ENCODE measurements at regions of chr12 and their contacts with region 1.

Region 1: GRCh38 chr12:6423267-6424007 is 21.3 kb upstream of the CD27 start:
- DNase-seq: peak; percentile 73 to 86
- ATAC-seq: peak; percentile 91 to 99 (median 98)
- H3K4me3 ChIP-seq: no peak overlapping the region
- H3K27ac ChIP-seq: peak overlapping the region in 2 of 10 donors; percentile 26 to 36
- H3K4me1 ChIP-seq: peaks cover 0 to 21% (median 6%) of the 10 kb centered on the region in 9 donors
- H3K27me3 ChIP-seq: no peaks in the 10 kb centered on the region
- CTCF ChIP-seq: peak; percentile 84 to 95 (median 92)

Region 2: DNA sequence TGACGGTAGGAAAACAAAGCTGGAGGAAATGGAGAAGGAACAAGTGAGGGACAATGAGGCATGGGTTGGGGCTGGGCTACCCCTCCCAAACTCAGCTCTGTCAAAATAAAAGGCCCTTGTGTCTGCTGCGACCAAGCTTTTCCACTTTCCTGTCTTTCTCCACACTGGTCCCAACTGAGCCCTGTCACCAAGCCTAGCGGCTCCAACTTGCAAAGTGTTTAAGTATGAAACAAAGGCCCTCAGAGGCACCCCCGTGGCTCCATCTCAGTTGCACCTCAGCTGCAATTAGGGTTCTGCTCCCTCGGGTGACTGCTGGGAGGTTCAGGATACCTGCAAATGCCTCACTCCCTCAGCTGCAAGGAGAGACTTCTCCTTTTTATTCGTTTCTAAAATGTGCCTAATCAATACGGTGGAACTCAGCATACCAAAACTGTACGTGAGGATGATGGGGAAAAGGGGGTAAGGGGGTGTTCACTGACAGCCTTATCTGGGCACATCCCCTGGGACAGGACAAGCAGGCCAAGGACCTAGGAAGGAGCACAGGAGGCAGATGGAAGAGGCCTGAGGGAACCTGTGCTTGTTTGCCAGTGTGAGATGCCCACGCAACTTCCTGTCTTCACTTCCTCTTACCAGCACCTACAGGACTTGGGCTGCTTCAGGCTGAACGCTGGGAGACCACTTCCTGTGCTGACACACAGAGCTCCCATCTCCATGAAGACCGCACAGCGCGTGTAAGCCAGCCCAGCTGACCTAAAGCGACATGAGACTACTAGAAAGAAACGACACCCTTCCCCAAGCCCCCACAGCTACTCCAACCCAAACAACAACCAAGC is 38.2 kb after region 1 on chr12:
- intact Hi-C with region 1: loop called (anchors 1 to 5 kb)
- DNase-seq: no peak
- ATAC-seq: peak; percentile 25 to 61 (median 35)
- H3K4me3 ChIP-seq: peak overlapping the region in 1 of 10 donors; percentile 22
- H3K27ac ChIP-seq: peak overlapping the region in 9 of 10 donors; percentile 39 to 89 (median 56)
- H3K4me1 ChIP-seq: peaks cover 0 to 71% (median 12%) of the 10 kb centered on the region in 9 donors
- H3K27me3 ChIP-seq: no peaks in the 10 kb centered on the region
- CTCF ChIP-seq: no peak

Region 3: GRCh38 chr12:6470375-6471163 is 47.1 kb after region 1 on chr12 and contains the start of gene VAMP1:
- intact Hi-C with region 1: loop called in 7 of 10 experiments (anchors 1 to 2 kb)
- DNase-seq: peak; percentile 97 to 98
- ATAC-seq: peak; percentile 97 to 99 (median 98)
- H3K4me3 ChIP-seq: peak within 1 kb of the TSS; percentile 60 to 78 (median 72)
- H3K27ac ChIP-seq: peak within 1 kb of the TSS; percentile 16 to 93 (median 86)
- H3K4me1 ChIP-seq: peaks cover 4 to 45% (median 21%) of the 10 kb centered on the region in 9 donors
- H3K27me3 ChIP-seq: no peaks in the 10 kb centered on the region
- CTCF ChIP-seq: peak in 2 of 9 donors; percentile 9 to 16
- total RNA-seq, gene VAMP1: 1.4 to 6.1 (median 3.0) TPM

Region 4: DNA sequence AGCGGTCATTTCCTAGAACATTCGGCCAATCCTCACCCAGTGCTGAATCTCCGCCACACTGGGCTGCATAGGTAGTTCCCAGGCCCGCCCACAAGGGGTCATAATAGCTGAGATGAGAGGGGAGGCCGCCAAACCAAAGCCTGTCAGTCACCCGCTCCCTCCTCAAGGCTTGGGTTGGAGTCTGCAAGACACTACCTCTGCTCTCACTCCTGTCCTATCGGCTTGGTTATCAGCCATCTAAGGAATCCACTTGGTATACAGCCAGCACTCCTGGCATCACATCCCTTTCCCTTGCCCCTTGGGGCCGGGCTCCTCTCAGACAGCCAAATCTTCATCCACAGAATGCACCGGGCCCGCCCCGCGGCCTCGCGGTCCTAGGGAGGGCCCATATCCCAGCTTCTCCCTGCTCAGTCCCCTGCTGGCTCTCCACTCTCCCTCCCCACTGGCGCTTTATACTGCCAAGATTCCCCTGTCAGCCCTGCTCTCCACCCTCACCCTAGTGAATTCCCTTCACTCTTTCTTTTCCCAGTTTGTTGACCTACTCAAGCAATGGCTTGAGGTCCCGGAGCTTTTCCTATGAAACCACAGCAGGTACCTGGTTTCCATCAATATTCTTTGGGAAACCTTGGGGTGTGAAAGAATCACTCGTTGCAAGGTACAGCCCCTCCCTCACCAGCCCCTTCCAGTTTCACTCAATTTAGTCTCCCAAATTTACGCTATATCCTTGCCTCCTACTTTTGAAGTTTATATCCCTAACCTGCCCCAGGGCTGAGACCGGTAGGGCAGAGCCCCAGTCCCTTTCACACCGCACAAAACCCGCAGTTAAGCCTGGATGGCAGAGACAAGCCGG is 131.0 kb after region 1 on chr12:
- intact Hi-C with region 1: loop called in 2 of 10 experiments (anchors 2 to 5 kb)
- DNase-seq: peak; percentile 77 to 83
- ATAC-seq: peak; percentile 30 to 57 (median 43)
- H3K4me3 ChIP-seq: peak overlapping the region; percentile 66 to 98 (median 94)
- H3K27ac ChIP-seq: peak overlapping the region; percentile 53 to 98 (median 92)
- H3K4me1 ChIP-seq: peaks cover 40 to 79% (median 70%) of the 10 kb centered on the region in 9 donors
- H3K27me3 ChIP-seq: no peaks in the 10 kb centered on the region
- CTCF ChIP-seq: peak; percentile 40 to 81 (median 69)

Region 5: GRCh38 chr12:6563448-6564050 is 140.1 kb after region 1 on chr12:
- intact Hi-C with region 1: loop called in 2 of 10 experiments (anchors 2 to 5 kb)
- DNase-seq: peak in 1 of 2 donors; percentile 54
- ATAC-seq: peak in 1 of 8 donors; percentile 22
- H3K4me3 ChIP-seq: no peak overlapping the region
- H3K27ac ChIP-seq: no peak overlapping the region
- H3K4me1 ChIP-seq: peaks cover 0 to 18% (median 15%) of the 10 kb centered on the region in 9 donors
- H3K27me3 ChIP-seq: no peaks in the 10 kb centered on the region
- CTCF ChIP-seq: peak; percentile 61 to 84 (median 78)

Region 6: DNA sequence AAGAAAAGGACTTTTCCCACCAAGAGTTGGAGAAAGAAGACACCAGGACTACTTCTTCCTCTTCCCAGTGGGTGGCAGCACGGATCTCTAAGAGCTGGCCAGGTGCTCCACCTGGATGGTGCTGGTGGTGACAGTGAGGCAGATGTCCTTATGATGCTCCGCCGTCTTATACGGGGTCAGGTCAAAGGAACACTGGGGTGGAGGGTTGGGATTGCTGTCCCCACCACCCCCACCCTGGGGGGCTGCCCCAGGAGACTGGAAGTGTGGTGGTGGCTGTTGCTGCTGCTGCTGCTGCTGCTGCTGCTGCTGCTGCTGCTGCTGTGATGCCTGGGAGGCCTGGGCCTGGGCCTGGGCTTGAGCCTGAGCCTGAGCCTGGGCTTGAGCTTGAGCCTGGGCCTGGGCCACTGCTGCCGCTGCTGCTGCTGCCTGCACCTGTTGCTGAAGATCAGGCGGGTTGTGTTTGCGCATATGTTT is 244.2 kb after region 1 on chr12:
- intact Hi-C with region 1: no loop called
- DNase-seq: no peak
- ATAC-seq: no peak
- H3K4me3 ChIP-seq: no peak overlapping the region
- H3K27ac ChIP-seq: no peak overlapping the region
- H3K4me1 ChIP-seq: peaks cover 0 to 10% (median 0%) of the 10 kb centered on the region in 9 donors
- H3K27me3 ChIP-seq: no peaks in the 10 kb centered on the region
- CTCF ChIP-seq: no peak

Measured in heart right ventricle (tissue), 16 donors.